ENCODE measurements at regions of chr17 and their contacts with region 1.

Region 1: GRCh38 chr17:82022981-82023374 is at the start of gene LRRC45:
- DNase-seq: peak; percentile 96 to 99 (median 98)
- ATAC-seq: peak; percentile 94
- H3K4me3 ChIP-seq: peak within 1 kb of the TSS; percentile 91
- H3K27ac ChIP-seq: peak within 1 kb of the TSS; percentile 77
- H3K4me1 ChIP-seq: peaks cover 14 to 89% of the 10 kb centered on the region in 2 experiments
- H3K27me3 ChIP-seq: no peaks in the 10 kb centered on the region
- CTCF ChIP-seq: no peak
- EP300 ChIP-seq: no peak
- POLR2A ChIP-seq: no peak
- RAD21 ChIP-seq: no peak
- polyA plus RNA-seq, gene LRRC45: not detected

Region 2: GRCh38 chr17:81941790-81942553 is 81.0 kb before region 1 on chr17:
- CTCF ChIA-PET with region 1: no interaction called
- POLR2A ChIA-PET with region 1: no interaction called
- in situ Hi-C with region 1: no loop called
- intact Hi-C with region 1: no loop called
- DNase-seq: no peak
- ATAC-seq: no peak
- H3K4me3 ChIP-seq: no peak overlapping the region
- H3K27ac ChIP-seq: no peak overlapping the region
- H3K4me1 ChIP-seq: peaks cover 0 to 48% of the 10 kb centered on the region in 2 experiments; a peak in 3 of 5 replicates
- H3K27me3 ChIP-seq: no peaks in the 10 kb centered on the region
- CTCF ChIP-seq: no peak
- EP300 ChIP-seq: no peak
- POLR2A ChIP-seq: no peak
- RAD21 ChIP-seq: no peak

Region 3: DNA sequence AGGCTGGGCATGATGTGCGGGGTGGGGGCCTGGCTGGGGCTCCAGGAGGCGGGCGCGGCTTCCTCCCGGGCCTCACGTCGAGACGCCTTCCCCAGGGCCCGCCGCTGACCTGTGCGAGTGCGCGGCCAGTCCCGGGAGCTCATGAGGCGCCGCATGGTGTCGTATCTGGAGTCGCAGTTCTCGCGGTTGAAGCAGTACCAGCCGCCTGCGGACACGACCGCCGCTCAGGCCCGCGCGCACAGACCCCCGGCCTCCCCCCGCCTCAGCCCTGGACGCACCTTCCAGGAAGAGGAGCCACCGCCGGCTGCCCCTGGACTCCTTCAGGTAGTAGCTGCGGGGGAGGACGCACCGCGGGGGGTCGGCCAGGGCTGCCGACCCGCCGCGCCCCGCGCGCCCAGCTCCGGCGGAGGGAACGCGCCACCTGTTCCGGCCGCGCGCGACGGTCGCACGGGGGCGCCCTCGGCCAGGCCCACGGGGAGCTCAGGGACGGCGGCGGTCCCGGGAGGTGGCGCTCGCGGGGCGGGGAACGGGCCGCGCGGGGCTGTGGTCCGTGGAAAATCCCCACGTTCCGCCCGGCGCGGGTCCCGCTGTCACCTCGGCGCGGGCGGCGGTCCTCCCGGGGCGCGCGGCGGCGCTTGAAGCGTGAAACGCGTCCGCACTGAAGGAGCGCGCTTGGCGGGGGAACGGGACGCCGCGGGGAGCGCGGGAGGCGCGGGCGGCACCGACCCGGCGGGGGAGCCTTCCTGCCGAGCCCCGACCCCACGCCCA is 63.4 kb before region 1 on chr17:
- CTCF ChIA-PET with region 1: interaction called, 103 read pairs
- POLR2A ChIA-PET with region 1: interaction called, 5 read pairs
- in situ Hi-C with region 1: no loop called
- intact Hi-C with region 1: loop called (anchors 1 kb)
- DNase-seq: peak; percentile 85 to 88 (median 86)
- ATAC-seq: peak; percentile 84
- H3K4me3 ChIP-seq: peak overlapping the region; percentile 58
- H3K27ac ChIP-seq: peak overlapping the region; percentile 68
- H3K4me1 ChIP-seq: peaks cover 7 to 73% of the 10 kb centered on the region in 2 experiments; a peak in 4 of 5 replicates
- H3K27me3 ChIP-seq: no peaks in the 10 kb centered on the region
- CTCF ChIP-seq: peak; percentile 65 to 99 (median 99)
- EP300 ChIP-seq: no peak
- POLR2A ChIP-seq: peak; percentile 56; the same call in 1 of the 2 replicates
- RAD21 ChIP-seq: peak; percentile 92 to 95

Region 4: DNA sequence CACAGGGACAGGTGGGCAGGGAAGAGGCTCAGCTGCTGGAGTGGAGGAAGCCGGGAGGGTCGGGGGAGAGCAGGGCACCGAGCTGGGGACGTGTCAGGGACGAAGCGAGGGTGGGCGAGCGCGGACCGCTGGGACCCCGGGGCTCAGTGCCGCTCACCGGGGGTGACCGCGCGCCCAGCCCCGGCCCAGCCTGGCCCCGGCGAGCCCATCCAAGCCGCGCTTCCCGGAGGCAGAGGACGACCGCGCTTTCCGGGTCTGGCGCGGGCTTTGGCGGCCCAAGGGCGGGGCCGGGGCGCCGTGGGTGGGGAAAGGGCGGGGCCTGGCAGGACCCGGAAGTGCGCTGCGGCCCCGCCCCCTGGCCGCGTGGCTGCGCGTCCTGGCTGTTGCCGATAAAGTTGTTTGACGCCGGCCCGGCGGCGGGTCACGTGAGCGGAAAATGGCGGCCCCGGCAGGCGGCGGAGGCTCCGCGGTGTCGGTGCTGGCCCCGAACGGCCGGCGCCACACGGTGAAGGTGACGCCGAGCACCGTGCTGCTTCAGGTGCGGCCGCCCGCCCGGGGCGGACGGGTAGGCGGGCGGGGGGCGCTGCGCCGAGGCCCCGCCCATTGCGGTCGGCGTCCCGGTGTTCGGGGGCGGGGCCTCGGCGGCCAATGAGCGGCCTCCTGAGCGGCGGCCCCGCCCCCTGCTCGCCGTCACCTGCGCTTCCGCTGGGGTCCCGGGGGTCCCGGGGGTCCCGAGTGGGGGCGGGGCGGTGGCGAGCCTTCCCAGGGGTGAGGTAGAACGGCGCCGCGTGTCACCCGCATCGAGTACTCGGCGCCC is 45.6 kb before region 1 on chr17 and contains the start of gene ASPSCR1:
- CTCF ChIA-PET with region 1: no interaction called
- POLR2A ChIA-PET with region 1: interaction called, 3 read pairs
- in situ Hi-C with region 1: no loop called
- intact Hi-C with region 1: loop called (anchors 5 kb)
- DNase-seq: peak; percentile 91 to 98 (median 94)
- ATAC-seq: peak; percentile 91
- H3K4me3 ChIP-seq: peak within 1 kb of the TSS; percentile 88
- H3K27ac ChIP-seq: peak within 1 kb of the TSS; percentile 98
- H3K4me1 ChIP-seq: peaks cover 23 to 27% of the 10 kb centered on the region in 2 experiments
- H3K27me3 ChIP-seq: no peaks in the 10 kb centered on the region
- CTCF ChIP-seq: no peak
- EP300 ChIP-seq: peak; percentile 49; the same call in 1 of the 2 replicates
- POLR2A ChIP-seq: peak; percentile 92
- RAD21 ChIP-seq: no peak
- polyA plus RNA-seq, gene ASPSCR1: 0.90 to 2.2 TPM

Measured in K562 (cell line).